Right cardiac atrium (tissue), 5 donors: ENCODE measurements at regions of chr12 and their contacts with region 1.

Region 1: GRCh38 chr12:57213058-57213715 is 3.4 kb upstream of the NXPH4 start:
- DNase-seq: peak; percentile 87 to 95 (median 95)
- ATAC-seq: peak; percentile 64 to 70
- H3K4me3 ChIP-seq: no peak overlapping the region
- H3K27ac ChIP-seq: no peak overlapping the region
- H3K4me1 ChIP-seq: peaks cover 4% of the 10 kb centered on the region
- H3K27me3 ChIP-seq: no peaks in the 10 kb centered on the region

Region 2: GRCh38 chr12:56208006-56208405 is 1005.2 kb before region 1 on chr12:
- intact Hi-C with region 1: no loop called
- DNase-seq: no peak
- ATAC-seq: no peak
- H3K4me3 ChIP-seq: no peak overlapping the region
- H3K27ac ChIP-seq: no peak overlapping the region
- H3K4me1 ChIP-seq: no peaks in the 10 kb centered on the region
- H3K27me3 ChIP-seq: no peaks in the 10 kb centered on the region

Region 3: GRCh38 chr12:57238854-57239554 is 25.8 kb after region 1 on chr12:
- intact Hi-C with region 1: loop called (anchors 1 to 2 kb)
- DNase-seq: peak; percentile 89 to 96 (median 96)
- ATAC-seq: peak; percentile 70 to 73
- H3K4me3 ChIP-seq: peak overlapping the region; percentile 52
- H3K27ac ChIP-seq: no peak overlapping the region
- H3K4me1 ChIP-seq: peaks cover 2% of the 10 kb centered on the region
- H3K27me3 ChIP-seq: no peaks in the 10 kb centered on the region